A549 (cell line): ENCODE measurements at regions of chr1 and their contacts with region 1.

Region 1: DNA sequence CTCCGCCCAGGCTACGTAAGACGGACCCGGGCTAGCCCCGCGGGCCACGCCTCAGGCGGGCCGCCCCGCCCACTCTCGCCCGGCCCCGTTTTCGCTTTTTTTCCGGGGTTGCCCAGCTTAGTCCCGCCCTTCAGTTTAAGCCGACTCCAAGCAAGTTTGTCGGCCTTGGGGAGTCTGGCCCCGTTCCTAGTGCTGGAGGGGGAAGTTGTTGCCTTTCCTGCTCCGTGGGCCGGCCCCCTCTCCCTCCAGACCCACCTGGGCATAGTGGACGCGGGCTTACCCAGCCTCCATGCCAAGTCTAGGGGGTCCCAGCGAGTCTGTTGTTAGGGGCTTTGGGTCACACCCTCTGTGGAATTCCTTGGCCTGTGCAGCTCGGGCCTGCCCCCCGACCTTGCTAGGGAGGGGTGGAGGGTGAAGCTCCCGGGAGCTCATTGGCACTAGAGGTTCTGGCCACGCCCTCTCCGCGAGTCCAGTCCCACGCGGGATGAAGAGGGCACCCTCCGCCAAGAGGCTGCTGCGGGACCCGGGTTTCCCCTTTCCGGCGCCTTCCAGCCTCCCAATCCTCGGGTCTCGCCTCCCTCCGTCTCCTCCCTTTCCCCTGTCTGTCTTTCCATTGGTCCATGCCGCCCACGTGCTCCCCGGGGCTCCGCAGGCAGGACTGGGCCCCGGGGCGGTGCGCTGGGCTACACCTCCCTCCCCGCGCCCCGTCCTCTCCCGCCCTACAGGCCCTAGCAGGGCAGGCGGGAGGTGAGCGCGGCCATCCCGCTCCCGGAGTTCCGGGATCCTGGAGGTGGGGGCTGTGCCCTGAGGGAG is 3.3 kb downstream of the RUSC1 start:
- DNase-seq: peak; percentile 97 to 98
- ATAC-seq: peak; percentile 77 to 85
- H3K4me3 ChIP-seq: peak overlapping the region; percentile 71
- H3K27ac ChIP-seq: peak overlapping the region; percentile 94 to 98
- H3K4me1 ChIP-seq: peaks cover 20% of the 10 kb centered on the region
- CTCF ChIP-seq: no peak
- EP300 ChIP-seq: no peak
- POLR2A ChIP-seq: peak; percentile 79
- RAD21 ChIP-seq: no peak

Region 2: DNA sequence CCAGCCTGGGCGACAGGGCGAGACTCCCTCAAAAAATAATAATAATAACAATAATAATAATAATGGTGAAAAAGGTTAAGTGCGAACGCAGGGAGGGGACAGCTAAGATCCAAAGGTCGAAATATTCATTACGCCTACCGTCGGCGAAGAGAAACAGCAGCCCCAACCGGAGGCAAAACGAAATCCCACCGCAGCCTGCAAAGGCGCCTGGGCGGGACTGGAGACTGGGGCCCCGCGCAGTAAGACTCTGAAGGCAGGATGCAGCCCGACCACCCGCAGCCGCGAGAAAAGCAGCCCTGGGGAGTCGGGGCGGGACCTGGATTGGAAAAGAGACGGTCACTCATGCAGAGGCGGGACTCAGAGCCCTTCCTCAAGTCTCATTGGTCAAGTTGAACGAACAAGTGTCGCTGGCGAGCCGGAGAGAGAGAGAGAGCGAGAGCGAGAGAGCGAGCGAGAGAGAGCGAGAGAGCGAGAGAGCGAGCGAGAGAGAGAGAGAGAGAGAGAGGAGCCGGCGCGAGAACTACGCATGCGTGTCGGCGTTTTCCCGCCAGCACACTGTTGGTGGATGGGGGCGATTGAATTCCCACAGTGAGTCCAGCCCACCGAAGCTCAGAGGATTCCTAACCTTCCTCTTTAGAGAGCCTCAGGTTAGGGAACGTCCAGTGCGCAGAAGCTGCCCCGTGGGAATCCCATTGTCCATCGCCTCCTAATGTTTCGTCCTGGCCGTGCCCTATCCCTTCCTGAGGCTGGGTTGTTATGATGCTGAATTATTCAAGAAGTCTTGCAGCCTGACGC is 79.4 kb before region 1 on chr1:
- CTCF ChIA-PET with region 1: interaction called, 149 read pairs
- POLR2A ChIA-PET with region 1: interaction called, 7 read pairs
- DNase-seq: peak; percentile 99
- ATAC-seq: peak; percentile 94 to 96
- H3K4me3 ChIP-seq: peak overlapping the region; percentile 59
- H3K27ac ChIP-seq: peak overlapping the region; percentile 82 to 90
- H3K4me1 ChIP-seq: peaks cover 24% of the 10 kb centered on the region
- CTCF ChIP-seq: no peak
- EP300 ChIP-seq: no peak
- POLR2A ChIP-seq: peak; percentile 79
- RAD21 ChIP-seq: 0 out of 5 replicates have a peak, but pooled peaks of 1 of the 2 experiments have one; percentile 16

Region 3: DNA sequence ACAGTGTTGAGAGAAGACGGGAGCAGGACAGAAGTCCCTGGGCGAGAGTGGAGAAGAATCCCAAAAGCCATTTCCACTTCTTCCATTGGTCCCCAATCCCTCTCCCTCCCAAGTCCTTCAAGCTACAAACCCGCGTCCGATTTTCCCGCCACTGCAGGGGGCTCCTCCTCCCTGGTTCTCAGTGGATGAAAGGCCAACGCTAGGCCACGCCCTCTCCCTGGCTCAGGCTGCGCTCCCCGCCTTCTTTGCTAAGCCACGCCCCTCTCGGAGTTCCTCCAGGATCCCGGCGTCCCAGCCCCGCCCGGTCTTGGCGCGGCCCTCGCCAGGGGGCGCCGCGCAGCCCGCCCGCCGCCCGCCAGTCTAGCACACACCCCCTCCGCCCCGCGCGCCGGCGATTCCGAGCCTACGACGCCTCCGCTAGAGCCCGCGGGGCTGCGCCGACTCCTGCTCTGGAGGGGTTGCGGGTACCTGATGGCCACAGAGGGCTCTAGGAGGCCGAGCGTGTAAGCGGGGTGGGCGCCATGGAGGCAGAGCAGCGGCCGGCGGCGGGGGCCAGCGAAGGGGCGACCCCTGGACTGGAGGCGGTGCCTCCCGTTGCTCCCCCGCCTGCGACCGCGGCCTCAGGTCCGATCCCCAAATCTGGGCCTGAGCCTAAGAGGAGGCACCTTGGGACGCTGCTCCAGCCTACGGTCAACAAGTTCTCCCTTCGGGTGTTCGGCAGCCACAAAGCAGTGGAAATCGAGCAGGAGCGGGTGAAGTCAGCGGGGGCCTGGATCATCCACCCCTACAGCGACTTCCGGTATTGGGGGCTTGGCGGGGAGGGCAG is 46.7 kb before region 1 on chr1 and contains the start of gene HCN3:
- CTCF ChIA-PET with region 1: interaction called, 44 read pairs
- POLR2A ChIA-PET with region 1: interaction called, 14 read pairs
- DNase-seq: peak; percentile 95 to 97
- ATAC-seq: peak; percentile 68 to 82
- H3K4me3 ChIP-seq: peak within 1 kb of the TSS; percentile 93
- H3K27ac ChIP-seq: peak within 1 kb of the TSS; percentile 76 to 87
- H3K4me1 ChIP-seq: peaks cover 14% of the 10 kb centered on the region; the same call in 2 of the 3 replicates
- CTCF ChIP-seq: peak; percentile 87
- EP300 ChIP-seq: no peak
- POLR2A ChIP-seq: no peak; the same call in 1 of the 2 replicates
- RAD21 ChIP-seq: peak; percentile 33 to 69; a peak in 4 of 5 replicates
- polyA plus RNA-seq, gene HCN3: 4.1 and 7.3 TPM in 2 replicates

Region 4: DNA sequence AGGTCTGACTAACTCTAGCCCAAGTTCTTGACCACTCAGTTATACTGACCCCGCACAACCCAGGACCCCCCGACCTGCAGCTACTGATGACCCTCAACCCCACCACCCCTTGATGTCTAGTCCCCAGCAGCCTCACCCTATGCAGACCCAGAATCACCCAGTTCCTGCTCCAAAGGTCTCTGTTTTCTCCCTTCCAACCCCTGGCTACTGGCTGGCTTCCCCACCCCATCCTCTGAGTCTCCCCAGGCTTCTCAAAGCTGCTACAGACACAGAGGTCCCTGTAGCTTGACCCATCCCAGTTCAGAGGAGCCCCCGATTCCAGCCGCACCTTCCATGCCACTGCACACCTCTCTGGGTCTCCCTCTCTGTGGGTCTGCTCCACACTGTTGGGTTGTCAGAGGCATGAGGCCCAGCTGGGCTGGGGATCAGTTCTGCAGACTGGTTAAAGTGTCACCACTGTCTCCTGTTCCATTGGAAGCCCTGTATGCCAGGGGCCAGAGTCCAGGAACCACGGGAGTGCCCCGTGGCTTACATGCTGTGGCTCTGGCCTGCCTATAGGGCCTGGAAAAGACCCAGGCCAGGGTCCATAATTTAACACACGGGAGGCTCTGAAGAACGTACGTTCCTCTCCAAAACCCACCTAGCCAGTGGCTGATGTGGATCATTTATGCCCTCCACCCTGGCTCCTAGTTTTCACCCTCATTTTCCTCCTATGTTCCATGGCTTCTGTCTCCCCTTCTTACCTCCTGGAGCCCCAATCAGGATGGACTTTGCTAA is 23.3 kb before region 1 on chr1:
- CTCF ChIA-PET with region 1: interaction called, 37 read pairs
- POLR2A ChIA-PET with region 1: no interaction called
- DNase-seq: no peak
- ATAC-seq: no peak; a peak in 2 of 6 replicates
- H3K4me3 ChIP-seq: no peak overlapping the region
- H3K27ac ChIP-seq: no peak overlapping the region
- H3K4me1 ChIP-seq: peaks cover 9% of the 10 kb centered on the region; the same call in 2 of the 3 replicates
- CTCF ChIP-seq: no peak
- EP300 ChIP-seq: no peak
- POLR2A ChIP-seq: no peak
- RAD21 ChIP-seq: no peak

Region 5: DNA sequence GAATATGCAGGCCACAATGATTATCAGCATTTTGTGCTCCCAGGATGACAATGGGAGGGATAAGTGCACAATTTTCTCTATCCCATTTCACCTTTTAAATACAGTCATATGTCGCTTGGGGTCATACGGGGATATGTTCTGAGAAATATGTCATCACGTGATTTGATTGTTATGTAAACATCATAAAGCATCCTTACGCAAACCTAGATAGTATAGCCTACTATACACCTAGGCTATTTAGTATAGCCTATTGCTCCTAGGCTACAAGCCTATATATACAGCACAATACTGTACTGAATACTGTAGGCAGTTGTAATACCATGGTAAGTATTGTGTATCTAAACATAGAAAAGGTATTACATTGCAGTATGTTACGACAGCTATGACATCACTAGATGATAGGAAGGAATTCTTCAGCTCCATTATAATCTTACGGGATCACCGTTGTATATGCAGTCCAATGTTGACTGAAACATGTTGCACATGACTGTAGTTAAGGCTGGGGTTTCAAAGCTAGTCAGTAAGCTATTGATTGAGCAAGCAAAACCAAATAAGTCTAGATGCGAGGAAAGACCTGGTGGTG is 15.6 kb after region 1 on chr1:
- CTCF ChIA-PET with region 1: interaction called, 43 read pairs
- POLR2A ChIA-PET with region 1: interaction called, 3 read pairs
- DNase-seq: no peak
- ATAC-seq: no peak; a peak in 1 of 6 replicates
- H3K4me3 ChIP-seq: no peak overlapping the region
- H3K27ac ChIP-seq: no peak overlapping the region
- H3K4me1 ChIP-seq: no peaks in the 10 kb centered on the region
- CTCF ChIP-seq: no peak
- EP300 ChIP-seq: no peak
- POLR2A ChIP-seq: no peak
- RAD21 ChIP-seq: no peak

Region 6: GRCh38 chr1:155648551-155649147 is 324.6 kb after region 1 on chr1:
- CTCF ChIA-PET with region 1: interaction called, 10 read pairs
- POLR2A ChIA-PET with region 1: interaction called, 3 read pairs
- DNase-seq: peak; percentile 85 to 87
- ATAC-seq: peak; percentile 93 to 96
- H3K4me3 ChIP-seq: peak overlapping the region; percentile 36; the same call in 2 of the 3 replicates
- H3K27ac ChIP-seq: peak overlapping the region; percentile 81 to 92
- H3K4me1 ChIP-seq: peaks cover 67% of the 10 kb centered on the region
- CTCF ChIP-seq: peak; percentile 77
- EP300 ChIP-seq: no peak
- POLR2A ChIP-seq: no peak
- RAD21 ChIP-seq: peak; percentile 84 to 85